Mucosa of descending colon (tissue), 3 donors: ENCODE measurements at regions of chr13 and their contacts with region 1.

Region 1: DNA sequence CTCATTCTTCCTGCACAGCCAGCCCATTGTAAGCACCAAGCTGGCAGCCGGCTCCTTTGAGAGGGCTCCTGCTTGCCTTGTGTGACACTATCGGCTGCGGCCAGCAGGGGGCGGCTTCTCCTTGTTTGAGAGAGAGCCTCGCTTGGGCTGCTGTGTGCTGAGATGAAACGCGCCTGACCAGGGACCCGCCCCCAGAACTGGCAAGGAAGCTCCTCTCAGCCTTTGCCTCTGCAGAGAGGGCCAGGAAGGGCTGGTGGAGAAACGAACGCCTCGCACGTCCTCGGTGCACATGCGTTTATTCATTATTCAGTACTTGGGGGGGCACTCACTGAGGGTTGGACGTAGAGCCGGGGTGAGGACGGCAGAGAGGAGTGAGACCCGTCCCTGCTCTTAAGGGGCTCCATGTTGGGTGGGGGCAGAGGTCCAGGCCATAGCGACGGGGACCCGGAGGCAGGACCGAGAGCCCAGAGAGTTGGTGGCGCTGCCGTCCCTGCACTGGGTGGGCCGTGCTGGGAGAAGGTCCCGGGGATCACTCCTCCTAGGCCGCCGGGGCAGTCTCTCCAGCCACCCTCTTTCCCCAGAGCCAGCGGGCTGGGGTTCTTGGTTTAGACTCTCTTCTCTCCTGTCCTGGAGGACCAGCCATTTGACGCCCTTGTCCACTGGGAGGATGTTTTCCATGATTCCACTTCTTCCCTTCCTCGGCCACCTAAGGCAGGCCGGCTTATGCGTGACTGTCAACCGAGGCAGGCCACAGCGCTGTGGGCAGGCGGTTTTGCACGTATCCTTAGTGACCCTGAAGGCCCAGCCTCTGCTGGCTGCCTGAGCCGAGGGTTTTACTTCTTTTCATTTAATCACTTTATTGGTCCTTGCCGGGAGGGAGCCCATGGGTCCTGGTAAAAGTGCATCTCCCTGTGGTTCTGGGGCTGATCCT is 174.5 kb downstream of the KATNAL1 start:
- DNase-seq: peak; percentile 97 to 100 (median 99)
- ATAC-seq: peak; percentile 94
- H3K4me3 ChIP-seq: no peak overlapping the region
- H3K4me1 ChIP-seq: peaks cover 5% of the 10 kb centered on the region
- CTCF ChIP-seq: peak; percentile 86

Region 2: GRCh38 chr13:30006246-30006645 is 126.6 kb before region 1 on chr13:
- intact Hi-C with region 1: no loop called
- DNase-seq: no peak
- ATAC-seq: no peak
- H3K4me3 ChIP-seq: no peak overlapping the region
- H3K4me1 ChIP-seq: no peaks in the 10 kb centered on the region
- CTCF ChIP-seq: no peak

Region 3: DNA sequence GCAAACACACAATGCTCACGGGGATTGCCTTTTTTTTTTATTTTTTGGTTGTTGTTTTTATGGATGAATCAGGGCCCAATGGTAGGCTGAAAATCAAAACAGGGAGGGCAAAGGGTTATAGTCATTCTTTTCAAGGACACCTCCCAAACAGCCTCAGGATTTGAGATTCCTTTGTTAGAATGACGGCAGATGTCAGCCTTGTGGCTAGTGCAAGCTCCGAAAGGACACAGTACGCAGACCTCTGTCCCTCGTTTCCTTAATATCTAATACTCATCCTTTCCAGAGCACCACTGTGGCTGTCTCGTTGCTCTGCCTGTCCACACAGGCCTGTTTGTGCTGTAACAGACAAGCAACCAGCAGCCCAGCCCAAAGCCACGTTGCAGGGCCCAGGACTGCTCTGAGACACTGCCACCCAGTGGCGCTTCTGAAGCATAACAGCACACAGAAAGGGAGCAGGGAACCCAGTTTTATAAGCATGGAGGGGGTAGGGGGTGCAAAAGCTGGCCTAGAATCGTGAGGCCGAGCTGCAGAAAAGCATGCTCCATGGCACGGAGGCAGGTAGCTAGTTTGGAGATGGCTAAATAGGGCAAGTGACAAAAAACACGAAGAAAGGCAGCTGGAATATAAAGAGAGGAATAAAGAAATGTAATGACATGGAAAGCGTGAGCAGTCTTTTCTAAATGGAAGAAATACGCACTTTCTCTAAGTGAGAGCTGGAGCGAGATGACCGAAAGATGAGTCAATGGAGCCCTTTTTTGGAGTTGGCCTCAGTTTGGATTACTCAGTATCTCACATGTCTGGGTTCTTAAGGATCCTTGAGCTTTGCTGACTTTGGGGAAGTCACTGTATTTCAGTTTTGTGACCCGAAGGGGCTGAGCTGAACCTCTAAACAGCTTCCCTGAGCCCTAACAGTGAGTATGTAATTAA is 732.5 kb after region 1 on chr13:
- intact Hi-C with region 1: loop called in 1 of 2 experiments (anchors 5 kb)
- DNase-seq: peak; percentile 65 to 82 (median 73)
- ATAC-seq: peak; percentile 94
- H3K4me3 ChIP-seq: no peak overlapping the region
- H3K4me1 ChIP-seq: peaks cover 6% of the 10 kb centered on the region
- CTCF ChIP-seq: peak; percentile 79